Activated CD8-positive, alpha-beta T cell treated with anti-CD3 and anti-CD28 coated beads for 36 hours (primary cell): ENCODE measurements at regions of chr11 and their contacts with region 1.

Region 1: DNA sequence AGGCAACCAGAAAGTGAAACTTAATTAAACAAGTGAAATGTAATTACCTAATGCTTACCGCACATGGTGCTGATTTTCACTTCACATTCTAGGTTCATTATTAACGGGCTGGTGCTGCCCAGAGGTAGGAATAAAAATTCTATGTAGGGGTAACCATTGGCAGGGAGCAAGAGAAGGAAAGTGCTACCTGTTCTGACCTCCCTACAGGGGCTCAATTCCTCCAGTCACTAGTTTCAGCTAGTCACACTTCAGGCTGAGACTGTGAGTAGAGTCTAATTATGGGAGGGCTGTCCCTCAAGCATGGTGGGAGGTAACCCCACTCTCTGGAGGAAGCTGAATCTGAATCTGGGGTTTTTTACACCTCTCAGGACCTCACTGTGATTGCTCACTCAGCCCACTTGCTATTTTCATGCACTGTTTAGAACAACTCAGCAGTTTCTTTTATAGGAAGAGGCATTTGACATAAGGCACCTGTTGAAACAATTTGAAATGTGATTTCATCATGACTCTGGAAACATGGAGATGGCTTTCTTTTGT is 75.4 kb downstream of the MAML2 start:
- DNase-seq: peak; percentile 79
- ATAC-seq: peak; percentile 98
- H3K4me3 Mint-ChIP-seq: peak overlapping the region; percentile 58
- H3K27ac Mint-ChIP-seq: peak overlapping the region; percentile 90
- H3K4me1 Mint-ChIP-seq: peaks cover 89% of the 10 kb centered on the region
- H3K27me3 Mint-ChIP-seq: no peaks in the 10 kb centered on the region
- CTCF ChIP-seq: no peak

Region 2: DNA sequence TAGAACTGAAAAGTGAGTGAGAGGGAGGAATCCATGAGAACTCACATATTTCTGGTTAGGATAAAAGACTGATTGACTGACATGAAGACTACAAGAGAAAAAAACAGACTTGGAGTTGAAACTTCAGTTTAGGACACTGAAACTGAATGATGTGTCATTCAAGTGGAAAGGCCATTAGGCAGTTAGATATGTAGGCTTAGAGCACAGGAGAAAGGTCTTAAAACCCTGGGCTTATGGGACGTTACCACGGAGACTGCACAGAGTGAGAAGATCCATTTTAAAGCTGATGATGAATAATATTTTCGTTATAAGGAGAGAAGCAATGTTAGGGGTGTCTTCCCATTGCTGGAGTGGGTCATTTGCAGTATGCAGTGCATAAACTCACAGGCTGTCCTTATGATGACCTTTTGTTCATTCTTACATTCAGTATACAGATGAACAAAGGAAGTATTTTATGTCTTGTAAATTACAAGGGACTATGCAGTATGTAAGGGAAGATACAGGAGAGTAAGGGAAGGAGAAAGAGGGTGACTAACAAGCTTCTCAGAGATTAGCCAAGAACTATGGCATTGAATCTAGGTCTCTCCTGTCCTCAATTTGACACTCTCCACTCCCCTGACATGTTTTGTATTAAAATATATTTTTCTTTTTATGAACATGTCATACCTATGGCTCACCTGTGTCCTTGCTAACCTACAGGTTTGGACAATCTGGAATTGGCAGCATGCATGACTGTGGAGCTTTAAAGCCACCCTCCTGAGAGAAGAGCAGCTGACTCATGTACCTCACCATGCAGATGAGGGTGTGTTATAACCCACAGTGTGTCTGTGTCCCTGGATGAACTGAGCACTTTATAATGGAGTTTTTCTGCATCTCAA is 11.7 kb after region 1 on chr11:
- CTCF ChIA-PET with region 1: no interaction called
- POLR2A ChIA-PET with region 1: interaction called, 14 read pairs
- intact Hi-C with region 1: no loop called
- DNase-seq: peak; percentile 21
- ATAC-seq: peak; percentile 81
- H3K4me3 Mint-ChIP-seq: peak overlapping the region; percentile 3
- H3K27ac Mint-ChIP-seq: peak overlapping the region; percentile 62
- H3K4me1 Mint-ChIP-seq: peaks cover 69% of the 10 kb centered on the region
- H3K27me3 Mint-ChIP-seq: no peaks in the 10 kb centered on the region
- CTCF ChIP-seq: no peak